Tibial artery (tissue), 4 donors: ENCODE measurements at regions of chr15 and their contacts with region 1.

Region 1: GRCh38 chr15:40421246-40422157 is 15.9 kb downstream of the IVD start:
- DNase-seq: peak; percentile 65 to 85
- H3K4me3 ChIP-seq: peak overlapping the region in 1 of 2 donors; percentile 3
- H3K27ac ChIP-seq: peak overlapping the region; percentile 42 to 47
- H3K4me1 ChIP-seq: peaks cover 0 to 19% (median 13%) of the 10 kb centered on the region in 4 donors
- H3K27me3 ChIP-seq: no peaks in the 10 kb centered on the region
- CTCF ChIP-seq: peak; percentile 97 to 99

Region 2: DNA sequence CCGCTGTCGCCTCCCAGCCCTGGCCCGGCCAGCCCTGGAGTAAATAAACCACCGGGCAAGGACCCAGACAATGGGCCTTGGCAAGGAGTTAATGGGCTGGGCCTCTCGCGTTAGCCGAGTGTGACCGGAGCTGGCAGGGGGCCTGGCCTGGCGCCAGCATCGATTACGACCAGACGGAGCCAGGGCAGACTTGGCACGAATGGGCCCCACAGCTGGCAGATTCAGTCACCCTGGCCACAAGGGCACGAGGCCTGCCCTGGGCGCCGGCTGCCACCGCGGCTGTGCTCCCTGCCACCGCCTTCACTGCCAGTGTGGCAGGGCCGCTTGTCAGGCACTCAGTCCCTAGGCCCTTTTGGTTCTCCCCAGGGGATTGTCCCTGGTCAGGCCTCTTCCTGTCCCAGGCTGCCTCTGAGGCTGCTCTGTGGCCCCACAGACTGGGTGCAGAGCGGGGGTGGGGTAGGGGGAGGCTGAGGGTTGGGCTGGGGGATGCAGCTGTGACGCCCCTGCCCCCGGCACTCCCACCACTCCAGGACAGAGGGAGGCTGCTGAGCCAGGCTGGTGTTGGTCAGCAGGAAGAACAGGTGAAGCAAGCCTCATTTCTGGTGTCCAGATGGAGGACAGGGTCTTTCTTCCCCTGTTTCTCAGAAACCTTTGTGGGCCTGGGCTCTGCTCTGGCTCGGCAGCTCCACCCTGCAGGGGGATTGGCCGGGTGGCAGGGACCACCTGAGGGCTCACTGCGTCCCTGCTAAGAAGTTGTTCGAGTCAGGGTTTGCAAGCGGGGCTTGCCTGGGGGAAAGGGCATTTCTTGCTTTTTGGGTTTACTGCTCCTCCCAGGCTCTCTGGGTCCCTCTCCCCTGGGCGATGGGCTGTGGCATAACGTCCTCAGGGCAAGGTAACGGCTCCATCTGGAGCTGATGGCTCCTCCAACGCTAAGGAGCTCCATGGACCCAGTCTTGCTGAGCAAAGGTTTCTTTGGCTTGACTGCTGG is 352.0 kb before region 1 on chr15:
- intact Hi-C with region 1: loop called (anchors 10 kb)
- DNase-seq: peak; percentile 92 to 99
- H3K4me3 ChIP-seq: no peak overlapping the region
- H3K27ac ChIP-seq: peak overlapping the region; percentile 52 to 72
- H3K4me1 ChIP-seq: peaks cover 0 to 25% (median 14%) of the 10 kb centered on the region in 4 donors
- H3K27me3 ChIP-seq: no peaks in the 10 kb centered on the region
- CTCF ChIP-seq: peak in 1 of 2 experiments; percentile 27

Region 3: DNA sequence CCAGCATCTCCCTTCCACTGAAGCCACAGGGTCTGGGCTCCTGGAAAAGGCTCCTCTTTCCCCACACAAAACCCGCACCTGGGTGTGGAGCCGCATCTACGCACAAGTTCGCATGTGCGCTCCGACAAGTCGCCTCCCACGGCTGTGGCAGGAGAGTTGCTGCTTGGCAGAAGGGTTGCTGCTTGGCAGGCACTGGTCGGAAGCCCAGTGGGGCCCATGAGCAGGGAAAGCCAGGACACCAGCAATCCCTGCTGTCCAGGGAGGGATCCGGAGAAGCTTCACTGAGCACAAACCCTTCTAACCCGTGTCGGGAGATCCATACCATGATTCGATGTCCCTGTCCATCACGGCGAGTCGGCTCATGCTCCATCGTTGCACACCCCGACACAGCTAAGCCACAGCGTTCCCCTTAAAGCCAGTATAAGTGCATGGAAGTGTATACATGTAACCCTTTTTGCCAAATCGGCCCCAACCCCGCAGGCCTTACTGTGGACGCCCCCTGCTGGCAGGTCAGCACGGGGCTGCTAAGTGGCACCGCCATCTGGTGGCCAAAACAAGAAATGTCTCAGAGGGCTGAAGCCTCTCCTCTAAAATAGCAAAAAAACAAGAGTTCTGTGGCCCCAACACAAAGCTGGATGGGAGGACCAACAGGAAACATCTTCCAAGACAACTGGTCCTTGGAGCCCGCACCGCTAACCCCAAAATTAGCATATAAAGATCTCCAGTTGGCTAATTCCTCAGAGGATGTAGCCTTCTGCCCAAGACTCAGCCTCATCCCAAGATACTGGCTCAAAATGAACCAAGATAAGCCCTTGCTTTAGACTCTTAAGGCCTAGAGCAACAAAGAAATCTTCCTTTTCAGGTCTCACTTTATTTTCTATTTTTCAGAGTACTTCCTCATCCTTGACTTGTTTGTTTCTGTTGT is 146.9 kb before region 1 on chr15:
- intact Hi-C with region 1: loop called (anchors 1 kb)
- DNase-seq: peak; percentile 69 to 83
- H3K4me3 ChIP-seq: no peak overlapping the region
- H3K27ac ChIP-seq: no peak overlapping the region
- H3K4me1 ChIP-seq: peaks cover 0 to 9% (median 2%) of the 10 kb centered on the region in 4 donors
- H3K27me3 ChIP-seq: peaks cover 0 to 35% of the 10 kb centered on the region in 2 donors
- CTCF ChIP-seq: peak; percentile 100

Region 4: GRCh38 chr15:40367686-40368611 is 53.6 kb before region 1 on chr15:
- intact Hi-C with region 1: loop called (anchors 1 kb)
- DNase-seq: peak; percentile 74 to 91
- H3K4me3 ChIP-seq: peak overlapping the region; percentile 36 to 48
- H3K27ac ChIP-seq: peak overlapping the region; percentile 29 to 48
- H3K4me1 ChIP-seq: peaks cover 0 to 21% (median 17%) of the 10 kb centered on the region in 4 donors
- H3K27me3 ChIP-seq: no peaks in the 10 kb centered on the region
- CTCF ChIP-seq: peak; percentile 85 to 94